ENCODE measurements at regions of chr16 and their contacts with region 1.

Region 1: DNA sequence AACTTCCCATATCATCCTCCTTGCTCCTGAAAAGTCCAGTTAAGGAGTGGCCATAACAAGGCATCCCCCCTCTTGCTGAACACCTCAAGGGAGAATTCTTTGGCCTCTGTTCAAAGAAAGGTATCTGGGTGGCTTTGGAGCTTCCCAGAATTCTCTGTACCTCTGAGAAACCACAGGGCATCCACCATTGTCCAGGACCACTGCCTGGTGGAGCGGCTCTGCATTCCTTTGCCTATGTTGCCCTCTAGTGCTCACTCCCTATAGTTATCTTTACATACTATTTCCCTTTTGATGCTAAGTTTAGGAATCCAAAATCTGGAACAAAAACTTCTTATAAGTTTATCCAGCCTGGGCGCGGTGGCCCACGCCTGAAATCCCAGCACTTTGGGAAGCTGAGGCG is 30.3 kb downstream of the CHD9NB start:
- DNase-seq: peak; percentile 53
- ATAC-seq: peak; percentile 77
- H3K4me3 ChIP-seq: no peak overlapping the region
- H3K27ac ChIP-seq: no peak overlapping the region
- H3K4me1 ChIP-seq: no peaks in the 10 kb centered on the region
- H3K27me3 ChIP-seq: no peaks in the 10 kb centered on the region
- CTCF ChIP-seq: peak; percentile 66

Region 2: GRCh38 chr16:52069866-52070265 is 952.5 kb before region 1 on chr16:
- CTCF ChIA-PET with region 1: no interaction called
- POLR2A ChIA-PET with region 1: no interaction called
- intact Hi-C with region 1: loop called (anchors 5 kb)
- DNase-seq: peak; percentile 2
- ATAC-seq: no peak
- H3K4me3 ChIP-seq: no peak overlapping the region
- H3K27ac ChIP-seq: no peak overlapping the region
- H3K4me1 ChIP-seq: no peaks in the 10 kb centered on the region
- H3K27me3 ChIP-seq: no peaks in the 10 kb centered on the region
- CTCF ChIP-seq: peak; percentile 21; the same call in 1 of the 2 replicates

Region 3: GRCh38 chr16:52976539-52977167 is 45.7 kb before region 1 on chr16:
- CTCF ChIA-PET with region 1: no interaction called
- POLR2A ChIA-PET with region 1: no interaction called
- intact Hi-C with region 1: loop called (anchors 2 kb)
- DNase-seq: peak; percentile 38
- ATAC-seq: peak; percentile 40; the same call in 1 of the 2 replicates
- H3K4me3 ChIP-seq: no peak overlapping the region
- H3K27ac ChIP-seq: no peak overlapping the region
- H3K4me1 ChIP-seq: no peaks in the 10 kb centered on the region
- H3K27me3 ChIP-seq: peaks cover 5% of the 10 kb centered on the region; the same call in 1 of the 2 replicates
- CTCF ChIP-seq: peak; percentile 44

Measured in PC-3 (cell line).